ENCODE measurements at regions of chr1 and their contacts with region 1.

Region 1: GRCh38 chr1:231584921-231585320 is 41.7 kb upstream of the DISC1 start:
- DNase-seq: no peak
- ATAC-seq: no peak
- H3K4me3 ChIP-seq: no peak overlapping the region
- H3K27ac ChIP-seq: no peak overlapping the region
- H3K4me1 ChIP-seq: no peaks in the 10 kb centered on the region
- H3K27me3 ChIP-seq: no peaks in the 10 kb centered on the region
- CTCF ChIP-seq: no peak
- POLR2A ChIP-seq: no peak

Region 2: DNA sequence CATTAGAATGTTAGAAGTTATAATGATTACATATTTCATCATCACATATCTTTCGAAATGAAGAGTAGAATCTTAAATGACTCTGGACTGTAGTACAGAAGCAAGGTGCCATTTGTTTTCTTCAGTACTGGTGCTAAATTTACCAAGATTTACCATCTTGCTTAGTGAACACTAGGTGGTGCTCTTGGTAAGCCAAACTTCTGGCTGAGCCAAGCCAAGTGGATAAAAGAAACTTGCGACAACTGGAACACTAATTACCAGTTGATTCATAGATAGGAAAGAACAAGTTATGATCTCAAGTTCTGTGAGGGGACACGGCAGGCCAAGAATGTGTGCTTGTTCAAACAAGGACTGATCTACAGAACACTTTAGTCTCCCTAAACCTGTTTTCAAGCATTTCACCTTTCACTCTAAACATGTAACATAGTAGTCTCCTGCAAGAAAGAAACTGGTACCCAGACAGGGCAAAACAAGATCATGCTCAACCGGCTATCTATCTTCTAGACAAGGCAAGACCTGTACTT is 227.0 kb before region 1 on chr1:
- intact Hi-C with region 1: loop called (anchors 5 kb)
- DNase-seq: peak; percentile 23 to 56 (median 40)
- ATAC-seq: peak; percentile 90
- H3K4me3 ChIP-seq: no peak overlapping the region
- H3K27ac ChIP-seq: peak overlapping the region in 2 of 4 donors; percentile 1 to 33
- H3K4me1 ChIP-seq: peaks cover 6% of the 10 kb centered on the region
- H3K27me3 ChIP-seq: no peaks in the 10 kb centered on the region
- CTCF ChIP-seq: peak; percentile 38 to 91 (median 80)
- POLR2A ChIP-seq: no peak

Measured in body of pancreas (tissue), 4 donors.